ENCODE measurements at regions of chr12 and their contacts with region 1.

Region 1: DNA sequence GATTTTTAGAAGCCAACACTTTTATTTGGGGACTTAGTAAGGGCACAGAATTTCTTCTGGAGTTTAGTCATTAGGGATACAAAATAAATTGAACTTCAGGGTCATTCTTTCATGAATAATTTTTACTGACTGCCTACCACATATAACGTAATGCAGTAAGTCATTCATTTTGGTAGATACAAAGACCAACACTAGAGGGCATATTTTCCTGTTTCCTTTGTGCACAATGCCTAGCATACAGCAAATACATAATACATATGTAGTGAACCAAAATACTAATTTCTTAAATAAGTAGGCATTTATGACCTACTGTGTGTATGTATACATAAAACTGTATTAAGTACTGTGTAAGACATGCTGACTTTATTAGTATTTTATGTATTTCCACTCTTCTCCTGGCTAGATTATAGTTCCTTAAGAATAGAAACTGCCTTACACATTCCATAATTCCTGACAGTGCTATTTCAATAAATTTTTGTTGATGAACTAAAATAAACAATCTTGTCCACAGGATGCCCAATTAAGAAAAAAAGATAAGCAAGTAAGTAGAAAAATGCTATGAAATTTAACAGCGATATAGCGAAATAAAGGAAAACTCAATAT is 47.9 kb downstream of the PPP1R12A start:
- DNase-seq: no peak
- H3K4me3 Mint-ChIP-seq: no peak overlapping the region
- H3K27ac Mint-ChIP-seq: no peak overlapping the region
- H3K4me1 Mint-ChIP-seq: peaks cover 32% of the 10 kb centered on the region
- H3K27me3 Mint-ChIP-seq: no peaks in the 10 kb centered on the region

Region 2: GRCh38 chr12:79935021-79935623 is 48.1 kb after region 1 on chr12 and contains the start of gene PPP1R12A:
- intact Hi-C with region 1: loop called (anchors 2 kb)
- DNase-seq: peak; percentile 94
- H3K4me3 Mint-ChIP-seq: peak within 1 kb of the TSS; percentile 92
- H3K27ac Mint-ChIP-seq: peak within 1 kb of the TSS; percentile 91
- H3K4me1 Mint-ChIP-seq: peaks cover 29% of the 10 kb centered on the region
- H3K27me3 Mint-ChIP-seq: no peaks in the 10 kb centered on the region
- total RNA-seq, gene PPP1R12A: 82.4 and 89.8 TPM in 2 replicates

Region 3: DNA sequence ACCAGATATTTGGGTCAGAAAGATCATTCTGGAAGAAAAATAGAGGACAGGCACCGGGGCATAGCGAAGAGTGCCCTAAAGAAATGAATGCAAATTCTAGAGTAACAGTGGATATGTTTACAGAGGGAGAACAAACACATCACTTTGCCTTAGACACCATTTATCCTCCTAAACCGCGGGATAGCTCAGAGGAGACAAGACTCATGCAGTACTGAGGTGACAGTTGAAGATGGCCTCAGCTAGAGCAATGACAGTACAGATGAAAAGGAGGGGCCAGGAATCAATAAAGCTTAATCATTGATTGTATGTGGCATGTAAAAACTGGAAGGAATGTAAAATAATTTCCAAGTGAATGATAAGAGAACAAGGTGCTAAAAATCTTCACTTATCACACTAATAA is 58.4 kb after region 1 on chr12:
- intact Hi-C with region 1: no loop called
- DNase-seq: no peak
- H3K4me3 Mint-ChIP-seq: no peak overlapping the region
- H3K27ac Mint-ChIP-seq: no peak overlapping the region
- H3K4me1 Mint-ChIP-seq: no peaks in the 10 kb centered on the region
- H3K27me3 Mint-ChIP-seq: peaks cover 13% of the 10 kb centered on the region

Region 4: GRCh38 chr12:80044694-80045046 is 157.7 kb after region 1 on chr12:
- intact Hi-C with region 1: loop called (anchors 10 kb)
- DNase-seq: no peak
- H3K4me3 Mint-ChIP-seq: no peak overlapping the region
- H3K27ac Mint-ChIP-seq: no peak overlapping the region
- H3K4me1 Mint-ChIP-seq: peaks cover 3% of the 10 kb centered on the region
- H3K27me3 Mint-ChIP-seq: peaks cover 17% of the 10 kb centered on the region

Region 5: DNA sequence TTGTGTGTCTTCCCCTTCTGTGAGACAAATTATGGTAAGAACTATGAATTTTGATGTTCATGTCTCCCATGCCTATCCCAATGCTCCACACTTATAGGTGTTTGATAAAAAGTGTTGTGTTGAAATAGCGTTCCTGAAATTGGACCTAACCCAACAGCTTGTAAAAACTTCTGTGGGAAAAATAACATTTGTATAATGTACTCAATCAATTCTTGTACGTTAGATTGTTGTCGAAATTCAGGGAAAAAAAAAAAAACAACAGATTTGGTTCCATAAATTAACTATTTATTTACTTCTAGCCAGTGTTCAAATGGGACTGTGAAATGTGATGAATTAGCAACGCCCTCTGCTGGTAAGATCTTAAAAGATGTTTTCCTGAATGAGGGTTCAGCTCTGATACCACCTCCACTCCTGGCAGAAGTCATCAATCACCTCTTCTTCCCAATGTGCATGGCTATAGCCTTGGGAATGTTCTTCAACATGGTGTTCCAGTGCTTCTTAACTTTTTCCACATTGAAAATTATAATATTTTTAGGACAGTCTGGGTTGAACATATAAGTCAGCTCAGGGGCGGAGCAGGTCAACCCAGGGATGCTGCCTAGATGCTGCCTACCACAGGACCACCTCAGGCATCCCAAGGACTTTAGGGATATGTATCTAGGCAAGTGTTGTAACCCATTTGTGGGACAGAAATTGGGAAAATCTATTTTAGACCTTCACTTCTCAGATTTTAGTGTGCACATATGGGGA is 383.0 kb after region 1 on chr12:
- intact Hi-C with region 1: loop called (anchors 5 kb)
- DNase-seq: no peak
- H3K4me3 Mint-ChIP-seq: no peak overlapping the region
- H3K27ac Mint-ChIP-seq: no peak overlapping the region
- H3K4me1 Mint-ChIP-seq: no peaks in the 10 kb centered on the region
- H3K27me3 Mint-ChIP-seq: peaks cover under 1% of the 10 kb centered on the region

Measured in activated T-helper 2 cell treated with anti-CD3 and anti-CD28 coated beads, Interferon-gamma antibody, Interleukin-2, Interleukin-4, amounts not matched to agents 10 μg/mL and 5 μg/mL and 100 μg/mL, durations not matched to agents 14 hours and 24 hours and 36 hours (primary cell).